ENCODE measurements at regions of chr10 and their contacts with region 1.

Region 1: DNA sequence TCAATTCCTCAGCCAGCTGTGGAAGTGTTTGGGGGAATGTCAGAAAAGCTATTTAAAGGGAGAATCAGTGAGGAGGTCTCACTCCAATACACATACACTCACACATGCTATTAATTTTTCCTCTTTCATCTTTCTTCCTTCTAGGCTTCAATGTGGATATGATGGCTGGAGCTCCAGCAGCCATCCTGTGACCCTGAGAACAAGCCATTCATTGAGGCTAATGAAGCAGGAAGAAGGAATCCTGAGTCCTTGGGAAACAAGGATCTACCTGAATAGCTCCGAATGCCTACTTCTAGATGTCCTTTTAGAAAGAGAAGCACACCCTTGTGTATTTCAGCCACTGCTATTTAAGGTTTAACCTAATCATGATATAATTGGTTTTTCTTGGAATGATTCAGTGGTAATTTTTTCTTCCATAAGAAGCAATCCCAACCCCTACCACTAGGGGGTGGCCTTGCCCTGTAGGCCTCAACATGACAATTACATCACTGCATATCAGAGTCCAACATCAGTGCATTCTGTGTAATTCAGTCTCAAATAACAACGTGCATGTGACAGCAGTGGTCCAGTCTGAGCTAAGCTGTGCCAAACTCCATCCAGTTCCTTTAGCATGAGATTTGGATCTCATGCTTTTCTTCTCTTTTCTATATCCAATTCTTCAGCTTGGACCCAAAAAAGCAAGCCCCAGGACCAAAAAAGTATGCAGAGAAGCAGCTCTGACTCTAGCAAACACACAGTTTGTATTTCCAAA is 85.3 kb upstream of the ANKRD1 start:
- DNase-seq: peak; percentile 43
- H3K4me3 ChIP-seq: no peak overlapping the region
- H3K27ac ChIP-seq: no peak overlapping the region
- H3K27me3 ChIP-seq: no peaks in the 10 kb centered on the region
- CTCF ChIP-seq: peak; percentile 96

Region 2: DNA sequence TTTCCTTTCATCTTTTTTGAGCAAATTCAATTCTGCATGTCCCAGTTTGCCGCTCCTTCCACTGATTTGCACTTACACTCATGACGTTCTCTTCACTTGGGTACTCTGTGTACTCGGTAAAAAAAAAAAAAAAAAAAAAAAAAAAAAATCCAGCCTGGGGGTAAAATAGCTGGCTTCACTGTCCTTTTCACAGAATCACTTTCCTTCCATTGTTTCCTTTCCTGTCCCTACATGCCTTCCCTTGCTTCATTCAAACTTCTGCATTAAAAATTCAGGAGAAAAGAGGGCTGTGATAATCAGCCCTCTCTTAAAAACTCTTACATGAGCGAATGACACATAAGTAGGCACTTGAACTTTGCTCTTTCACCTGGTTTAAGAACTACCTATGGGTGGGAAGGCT is 94.0 kb before region 1 on chr10:
- CTCF ChIA-PET with region 1: interaction called, 38 read pairs
- POLR2A ChIA-PET with region 1: no interaction called
- DNase-seq: no peak
- H3K4me3 ChIP-seq: no peak overlapping the region
- H3K27ac ChIP-seq: no peak overlapping the region
- H3K27me3 ChIP-seq: no peaks in the 10 kb centered on the region
- CTCF ChIP-seq: no peak

Region 3: GRCh38 chr10:90969947-90970684 is 36.1 kb before region 1 on chr10:
- CTCF ChIA-PET with region 1: interaction called, 14 read pairs
- POLR2A ChIA-PET with region 1: no interaction called
- DNase-seq: peak; percentile 18
- H3K4me3 ChIP-seq: no peak overlapping the region
- H3K27ac ChIP-seq: no peak overlapping the region
- H3K27me3 ChIP-seq: peaks cover 2% of the 10 kb centered on the region
- CTCF ChIP-seq: no peak

Region 4: GRCh38 chr10:90993340-90993739 is 12.8 kb before region 1 on chr10:
- CTCF ChIA-PET with region 1: interaction called, 27 read pairs
- POLR2A ChIA-PET with region 1: no interaction called
- DNase-seq: no peak
- H3K4me3 ChIP-seq: no peak overlapping the region
- H3K27ac ChIP-seq: no peak overlapping the region
- H3K27me3 ChIP-seq: no peaks in the 10 kb centered on the region
- CTCF ChIP-seq: no peak

Region 5: GRCh38 chr10:91023700-91024398 is 17.7 kb after region 1 on chr10:
- CTCF ChIA-PET with region 1: interaction called, 34 read pairs
- POLR2A ChIA-PET with region 1: no interaction called
- DNase-seq: no peak
- H3K4me3 ChIP-seq: no peak overlapping the region
- H3K27ac ChIP-seq: no peak overlapping the region
- H3K27me3 ChIP-seq: no peaks in the 10 kb centered on the region
- CTCF ChIP-seq: no peak

Region 6: DNA sequence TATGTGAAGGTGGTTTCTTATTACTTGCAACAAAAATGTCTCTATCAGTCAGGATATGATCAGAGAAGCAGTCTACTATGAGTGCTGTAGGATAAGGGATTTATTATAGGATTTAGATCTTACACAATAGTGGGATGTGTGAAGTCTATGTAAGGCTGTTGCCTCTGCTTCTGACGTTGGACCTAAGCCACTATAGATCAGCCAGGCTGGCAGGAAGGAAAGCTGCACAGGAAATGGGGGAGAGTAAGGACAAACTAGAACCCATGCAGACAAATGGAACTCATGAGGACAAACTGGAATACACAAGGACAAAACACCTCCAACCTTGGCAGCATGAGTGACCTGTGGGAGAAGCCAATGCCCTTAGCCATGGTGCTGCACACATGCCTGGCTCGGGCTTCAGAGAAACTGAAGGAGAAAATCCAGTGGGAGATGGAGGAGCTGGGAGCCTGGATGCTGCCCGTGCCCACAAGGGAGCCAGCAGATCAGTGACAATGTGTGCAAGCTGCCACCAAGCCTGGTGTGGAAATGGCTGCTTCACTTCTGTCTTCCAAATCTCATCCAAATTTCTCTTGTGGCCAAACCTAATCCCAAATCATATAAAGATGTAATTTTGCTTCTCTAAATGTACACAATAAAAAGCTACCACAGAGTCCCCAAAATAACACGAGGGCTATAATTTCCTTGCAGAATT is 67.3 kb after region 1 on chr10:
- CTCF ChIA-PET with region 1: interaction called, 13 read pairs
- POLR2A ChIA-PET with region 1: no interaction called
- DNase-seq: no peak
- H3K4me3 ChIP-seq: no peak overlapping the region
- H3K27ac ChIP-seq: no peak overlapping the region
- H3K27me3 ChIP-seq: peaks cover 7% of the 10 kb centered on the region
- CTCF ChIP-seq: no peak

Region 7: DNA sequence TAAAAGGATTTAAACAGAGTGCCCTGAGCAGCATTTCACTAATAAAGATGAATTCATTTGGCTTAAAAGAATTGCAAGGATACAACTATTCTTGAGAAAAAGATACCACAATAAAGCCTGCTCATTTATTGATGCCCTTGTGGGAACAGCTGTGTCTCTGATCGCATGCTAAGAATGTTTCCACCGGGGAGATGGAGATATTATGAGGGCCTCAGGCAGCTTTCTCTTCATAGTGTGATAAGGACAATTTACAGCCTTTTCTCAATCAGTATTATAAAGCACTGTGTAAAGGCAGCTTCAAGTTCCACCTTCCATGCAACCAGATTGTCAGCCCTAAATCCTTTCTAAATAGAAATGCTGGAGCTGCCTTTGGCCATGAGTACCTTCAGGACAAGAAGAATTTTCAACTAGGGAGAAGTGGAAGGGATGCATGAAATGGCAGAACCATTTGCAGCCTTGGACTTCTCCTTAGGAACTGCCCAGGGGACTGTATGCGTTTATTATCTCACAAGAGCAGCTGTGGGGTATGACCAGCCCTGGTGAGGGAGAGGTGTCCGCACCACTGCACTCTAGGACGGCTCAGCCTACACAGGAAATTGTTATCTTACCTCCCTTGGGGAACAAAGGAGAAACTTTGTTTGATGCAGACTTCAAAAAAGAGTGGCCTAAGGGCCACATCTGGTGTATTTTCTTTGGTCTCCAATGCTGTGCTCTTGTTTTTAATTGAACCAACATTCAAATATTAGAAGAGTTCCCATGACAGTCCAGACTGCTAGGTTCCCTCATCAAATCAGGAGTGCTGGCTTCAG is 97.4 kb after region 1 on chr10:
- CTCF ChIA-PET with region 1: no interaction called
- POLR2A ChIA-PET with region 1: no interaction called
- DNase-seq: no peak
- H3K4me3 ChIP-seq: no peak overlapping the region
- H3K27ac ChIP-seq: no peak overlapping the region
- H3K27me3 ChIP-seq: peaks cover 2% of the 10 kb centered on the region
- CTCF ChIP-seq: no peak

Region 8: DNA sequence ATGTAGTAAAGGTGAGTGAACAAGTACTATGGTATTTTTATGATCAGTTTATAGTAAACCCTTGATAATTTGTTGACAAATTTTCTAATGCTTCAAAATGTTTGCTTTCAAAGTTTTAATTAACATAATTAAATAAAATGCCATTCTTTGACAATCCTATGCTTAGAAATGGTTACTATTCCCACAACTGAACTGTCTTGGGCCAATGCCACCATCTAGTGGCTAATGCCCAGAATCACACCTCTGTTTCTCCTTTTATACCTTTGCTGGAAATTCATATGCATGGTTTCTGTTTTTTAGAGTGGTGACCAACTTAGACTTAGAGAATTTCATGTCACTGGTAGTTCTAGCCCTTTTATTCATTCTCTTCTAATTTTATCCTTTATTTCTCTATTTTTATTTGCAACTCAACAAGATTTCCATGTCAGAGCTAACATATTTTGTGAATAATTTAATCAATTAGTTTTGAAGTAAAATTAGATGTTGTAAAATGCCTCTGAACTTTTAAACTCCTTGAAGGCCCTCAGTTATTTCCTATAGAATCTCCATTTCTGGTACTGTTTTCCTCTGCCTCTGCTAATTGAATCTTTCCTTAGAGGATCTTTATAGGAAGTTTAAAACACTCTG is 245.4 kb after region 1 on chr10:
- CTCF ChIA-PET with region 1: interaction called, 169 read pairs
- POLR2A ChIA-PET with region 1: no interaction called
- DNase-seq: no peak
- H3K4me3 ChIP-seq: no peak overlapping the region
- H3K27ac ChIP-seq: no peak overlapping the region
- H3K27me3 ChIP-seq: no peaks in the 10 kb centered on the region
- CTCF ChIP-seq: peak; percentile 93